IMR-90 (cell line): ENCODE measurements at regions of chr1 and their contacts with region 1.

Region 1: GRCh38 chr1:221435504-221435904 is 306.4 kb downstream of the DUSP10 start:
- DNase-seq: peak; percentile 83
- ATAC-seq: peak; percentile 70
- H3K4me3 ChIP-seq: no peak overlapping the region
- H3K27ac ChIP-seq: no peak overlapping the region
- H3K4me1 ChIP-seq: peaks cover 4% of the 10 kb centered on the region
- H3K27me3 ChIP-seq: no peaks in the 10 kb centered on the region
- CTCF ChIP-seq: peak; percentile 90
- POLR2A ChIP-seq: no peak
- RAD21 ChIP-seq: peak; percentile 89

Region 2: GRCh38 chr1:220810179-220810653 is 625.3 kb before region 1 on chr1:
- CTCF ChIA-PET with region 1: interaction called, 5 read pairs
- POLR2A ChIA-PET with region 1: no interaction called
- dilution Hi-C with region 1: no loop called
- in situ Hi-C with region 1: loop called (anchors 10 kb)
- intact Hi-C with region 1: loop called (anchors 1 kb)
- DNase-seq: peak; percentile 78
- ATAC-seq: peak; percentile 99
- H3K4me3 ChIP-seq: no peak overlapping the region
- H3K27ac ChIP-seq: no peak overlapping the region
- H3K4me1 ChIP-seq: peaks cover under 1% of the 10 kb centered on the region; the same call in 1 of the 2 replicates
- H3K27me3 ChIP-seq: peaks cover 6% of the 10 kb centered on the region; the same call in 1 of the 2 replicates
- CTCF ChIP-seq: peak; percentile 91
- POLR2A ChIP-seq: no peak
- RAD21 ChIP-seq: peak; percentile 78

Region 3: DNA sequence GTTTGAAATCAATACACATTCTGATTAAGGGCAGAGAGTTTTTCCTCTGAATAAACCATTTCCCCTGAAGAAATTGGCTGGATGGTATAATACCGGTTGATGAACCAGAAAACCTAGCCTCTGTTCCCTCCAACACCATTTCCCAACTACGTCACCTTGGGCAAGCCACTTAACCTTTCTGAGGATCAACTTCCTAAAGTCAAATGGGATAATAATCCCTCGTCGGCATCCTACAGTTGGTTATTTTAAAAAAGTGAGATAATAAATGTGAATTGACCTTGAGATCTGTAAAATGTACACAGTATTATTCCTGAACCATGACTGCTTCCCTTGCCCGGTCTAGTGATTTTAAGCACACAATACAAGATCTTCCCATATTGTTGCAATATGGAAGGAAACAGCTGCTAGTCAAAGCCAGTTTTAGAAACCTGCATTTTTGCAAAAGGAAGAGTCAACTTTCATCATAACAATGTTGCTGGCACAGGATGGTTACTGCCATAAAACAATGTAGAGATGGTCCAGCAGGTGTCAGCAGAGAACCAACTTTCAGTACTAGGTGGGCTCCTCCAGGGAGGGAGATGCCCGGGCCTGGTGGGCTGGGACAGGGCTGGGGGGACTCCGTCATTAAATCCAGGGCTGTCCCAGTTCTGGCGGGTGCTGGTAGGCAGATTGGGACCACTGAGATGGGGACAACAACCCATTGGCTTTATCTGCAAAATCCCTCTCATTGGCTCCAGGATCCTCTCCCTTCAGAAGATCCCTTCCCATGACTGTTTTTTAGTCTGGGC is 561.4 kb before region 1 on chr1:
- CTCF ChIA-PET with region 1: interaction called, 5 read pairs
- POLR2A ChIA-PET with region 1: interaction called, 4 read pairs
- dilution Hi-C with region 1: no loop called
- in situ Hi-C with region 1: no loop called
- intact Hi-C with region 1: loop called (anchors 1 kb)
- DNase-seq: peak; percentile 66
- ATAC-seq: peak; percentile 43
- H3K4me3 ChIP-seq: no peak overlapping the region
- H3K27ac ChIP-seq: no peak overlapping the region
- H3K4me1 ChIP-seq: no peaks in the 10 kb centered on the region
- H3K27me3 ChIP-seq: no peaks in the 10 kb centered on the region
- CTCF ChIP-seq: peak; percentile 76
- POLR2A ChIP-seq: no peak
- RAD21 ChIP-seq: peak; percentile 82

Region 4: DNA sequence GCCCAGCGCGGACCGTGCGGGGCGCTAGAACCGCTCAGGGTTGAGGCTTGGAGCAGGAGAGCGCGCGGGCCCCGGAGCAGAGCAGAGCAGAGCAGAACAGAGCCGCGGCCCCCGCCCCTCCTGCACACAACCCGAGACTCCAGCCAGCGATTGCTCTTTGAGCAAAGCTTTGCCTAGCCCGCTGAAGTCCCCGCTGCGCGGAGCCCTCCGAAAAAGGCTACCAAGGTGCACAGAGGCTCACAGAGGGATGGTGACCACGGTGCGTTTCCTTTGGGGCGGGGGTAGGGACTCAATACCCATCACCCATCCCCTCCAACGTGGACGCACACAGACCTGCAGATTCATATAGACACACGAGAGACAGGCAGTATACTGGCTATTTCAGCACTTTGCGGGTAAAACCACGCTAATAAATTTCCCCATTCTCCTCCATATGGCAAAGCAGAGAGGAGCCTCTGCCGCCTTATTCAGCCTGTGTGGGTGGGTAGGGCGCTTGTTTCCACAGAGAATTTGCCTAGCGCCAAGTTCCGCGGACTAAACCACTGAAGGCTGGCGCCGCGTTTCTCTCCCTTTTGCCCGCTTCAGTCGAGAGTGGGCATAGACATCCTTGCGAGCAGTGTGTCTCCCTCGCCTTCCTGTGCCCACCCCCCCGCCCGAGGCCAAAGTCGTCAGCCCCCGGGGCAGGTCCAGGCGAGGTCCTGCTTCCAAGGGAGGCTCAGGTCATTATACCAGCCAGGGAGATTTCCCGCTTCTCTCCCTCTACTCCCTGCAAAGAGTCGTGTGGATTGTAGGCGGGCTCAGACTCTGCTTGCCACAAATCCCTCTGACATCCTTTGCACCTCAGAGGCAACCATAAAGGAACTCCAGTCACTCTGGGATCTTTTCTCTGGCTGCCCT is 547.7 kb before region 1 on chr1:
- CTCF ChIA-PET with region 1: no interaction called
- POLR2A ChIA-PET with region 1: no interaction called
- dilution Hi-C with region 1: no loop called
- in situ Hi-C with region 1: loop called (anchors 5 kb)
- intact Hi-C with region 1: no loop called
- DNase-seq: no peak
- ATAC-seq: no peak
- H3K4me3 ChIP-seq: no peak overlapping the region
- H3K27ac ChIP-seq: no peak overlapping the region
- H3K4me1 ChIP-seq: peaks cover 2% of the 10 kb centered on the region; the same call in 1 of the 2 replicates
- H3K27me3 ChIP-seq: peaks cover 23% of the 10 kb centered on the region
- CTCF ChIP-seq: no peak
- POLR2A ChIP-seq: no peak
- RAD21 ChIP-seq: no peak

Region 5: DNA sequence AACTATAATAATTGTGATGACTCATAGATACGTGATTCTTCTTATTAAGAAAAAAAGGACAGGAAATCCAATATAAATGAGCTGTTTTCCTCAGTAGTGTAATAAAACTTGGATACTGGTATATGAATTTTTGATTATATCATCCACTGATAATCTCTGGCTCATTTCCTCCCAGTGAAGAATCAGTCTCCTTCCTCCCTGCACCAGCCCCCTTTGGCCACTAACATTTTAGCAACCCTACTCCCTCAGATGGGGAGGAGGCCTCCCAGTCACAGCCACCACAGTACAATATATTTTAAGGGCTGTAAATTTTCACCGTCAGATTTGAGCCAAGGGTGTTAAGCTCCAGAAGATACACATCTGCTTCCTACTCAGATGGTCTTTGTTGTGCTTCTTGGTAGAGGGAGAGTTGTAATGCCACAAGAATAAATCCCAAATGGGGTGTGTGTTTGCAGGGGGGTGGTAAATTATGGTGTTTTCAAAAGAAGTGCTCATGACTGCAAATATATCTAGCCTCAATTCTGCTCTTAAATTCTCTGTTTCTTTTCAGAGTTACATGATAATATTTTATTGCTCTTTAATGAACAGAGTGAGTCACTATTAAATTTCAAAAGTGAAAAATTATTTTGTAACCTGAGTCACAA is 402.7 kb before region 1 on chr1:
- CTCF ChIA-PET with region 1: no interaction called
- POLR2A ChIA-PET with region 1: no interaction called
- dilution Hi-C with region 1: no loop called
- in situ Hi-C with region 1: no loop called
- intact Hi-C with region 1: no loop called
- DNase-seq: no peak
- ATAC-seq: no peak
- H3K4me3 ChIP-seq: no peak overlapping the region
- H3K27ac ChIP-seq: no peak overlapping the region
- H3K4me1 ChIP-seq: peaks cover 3% of the 10 kb centered on the region
- H3K27me3 ChIP-seq: no peaks in the 10 kb centered on the region
- CTCF ChIP-seq: no peak
- POLR2A ChIP-seq: no peak
- RAD21 ChIP-seq: no peak

Region 6: GRCh38 chr1:221097479-221098383 is 337.8 kb before region 1 on chr1:
- CTCF ChIA-PET with region 1: interaction called, 4 read pairs
- POLR2A ChIA-PET with region 1: no interaction called
- dilution Hi-C with region 1: no loop called
- in situ Hi-C with region 1: no loop called
- intact Hi-C with region 1: loop called (anchors 2 kb)
- DNase-seq: peak; percentile 88
- ATAC-seq: peak; percentile 72
- H3K4me3 ChIP-seq: no peak overlapping the region
- H3K27ac ChIP-seq: peak overlapping the region; percentile 3
- H3K4me1 ChIP-seq: peaks cover 17% of the 10 kb centered on the region
- H3K27me3 ChIP-seq: no peaks in the 10 kb centered on the region
- CTCF ChIP-seq: no peak
- POLR2A ChIP-seq: no peak
- RAD21 ChIP-seq: no peak

Region 7: GRCh38 chr1:221263831-221264767 is 171.4 kb before region 1 on chr1:
- CTCF ChIA-PET with region 1: interaction called, 43 read pairs
- POLR2A ChIA-PET with region 1: interaction called, 6 read pairs
- dilution Hi-C with region 1: no loop called
- in situ Hi-C with region 1: loop called (anchors 10 kb)
- intact Hi-C with region 1: loop called (anchors 1 kb)
- DNase-seq: peak; percentile 89
- ATAC-seq: peak; percentile 81
- H3K4me3 ChIP-seq: no peak overlapping the region
- H3K27ac ChIP-seq: no peak overlapping the region
- H3K4me1 ChIP-seq: peaks cover 2% of the 10 kb centered on the region; the same call in 1 of the 2 replicates
- H3K27me3 ChIP-seq: no peaks in the 10 kb centered on the region
- CTCF ChIP-seq: peak; percentile 68
- POLR2A ChIP-seq: no peak
- RAD21 ChIP-seq: peak; percentile 77

Region 8: GRCh38 chr1:221741711-221742554 is 306.4 kb after region 1 on chr1 and contains the start of gene DUSP10:
- CTCF ChIA-PET with region 1: no interaction called
- POLR2A ChIA-PET with region 1: no interaction called
- dilution Hi-C with region 1: no loop called
- in situ Hi-C with region 1: no loop called
- intact Hi-C with region 1: loop called (anchors 5 kb)
- DNase-seq: peak; percentile 100
- ATAC-seq: peak; percentile 93
- H3K4me3 ChIP-seq: peak within 1 kb of the TSS; percentile 74
- H3K27ac ChIP-seq: peak within 1 kb of the TSS; percentile 92
- H3K4me1 ChIP-seq: peaks cover 14% of the 10 kb centered on the region
- H3K27me3 ChIP-seq: no peaks in the 10 kb centered on the region
- CTCF ChIP-seq: 0 out of 2 replicates have a peak, but pooled peaks have one; percentile 8
- POLR2A ChIP-seq: peak; percentile 94
- RAD21 ChIP-seq: peak; percentile 49
- total RNA-seq, gene DUSP10: 59.1 and 71.4 TPM in 2 replicates

Region 9: DNA sequence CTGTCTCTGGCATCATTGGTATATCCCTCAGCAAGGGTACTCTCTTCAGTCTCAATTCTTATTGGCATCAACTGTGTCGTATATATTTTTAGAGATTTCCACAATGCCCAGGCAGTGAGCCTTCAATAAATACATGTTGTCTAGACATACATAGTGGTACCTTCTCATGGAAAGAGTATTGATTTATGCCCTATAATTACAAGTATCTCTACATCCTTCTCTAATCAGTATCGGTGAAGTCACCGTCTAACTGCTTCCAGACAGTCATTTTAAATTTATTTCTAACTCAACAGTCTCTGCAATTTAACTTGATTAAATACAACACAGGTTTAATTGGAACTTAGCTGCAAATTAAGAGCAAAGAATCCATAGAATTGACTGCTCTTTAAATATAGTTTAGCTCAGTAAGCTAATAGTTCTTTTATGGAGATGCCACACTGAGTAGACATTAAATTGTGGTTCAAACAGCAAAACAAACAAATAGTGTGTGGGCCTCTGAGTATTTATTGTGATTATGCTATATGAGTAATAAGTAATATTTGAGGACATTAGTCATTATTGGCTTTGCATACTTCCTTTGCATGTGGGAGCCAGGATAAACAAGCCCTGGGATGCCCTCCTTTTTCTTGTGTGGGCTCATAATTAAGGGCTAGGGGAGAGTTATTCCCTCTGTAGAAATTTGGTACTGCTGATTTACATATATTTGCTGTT is 433.2 kb after region 1 on chr1:
- CTCF ChIA-PET with region 1: no interaction called
- POLR2A ChIA-PET with region 1: no interaction called
- dilution Hi-C with region 1: no loop called
- in situ Hi-C with region 1: no loop called
- intact Hi-C with region 1: no loop called
- DNase-seq: peak; percentile 87
- ATAC-seq: peak; percentile 78
- H3K4me3 ChIP-seq: no peak overlapping the region
- H3K27ac ChIP-seq: no peak overlapping the region
- H3K4me1 ChIP-seq: peaks cover 11% of the 10 kb centered on the region
- H3K27me3 ChIP-seq: no peaks in the 10 kb centered on the region
- CTCF ChIP-seq: no peak
- POLR2A ChIP-seq: no peak
- RAD21 ChIP-seq: peak; percentile 12; the same call in 1 of the 2 replicates